ENCODE measurements at regions of chr20 and their contacts with region 1.

Region 1: DNA sequence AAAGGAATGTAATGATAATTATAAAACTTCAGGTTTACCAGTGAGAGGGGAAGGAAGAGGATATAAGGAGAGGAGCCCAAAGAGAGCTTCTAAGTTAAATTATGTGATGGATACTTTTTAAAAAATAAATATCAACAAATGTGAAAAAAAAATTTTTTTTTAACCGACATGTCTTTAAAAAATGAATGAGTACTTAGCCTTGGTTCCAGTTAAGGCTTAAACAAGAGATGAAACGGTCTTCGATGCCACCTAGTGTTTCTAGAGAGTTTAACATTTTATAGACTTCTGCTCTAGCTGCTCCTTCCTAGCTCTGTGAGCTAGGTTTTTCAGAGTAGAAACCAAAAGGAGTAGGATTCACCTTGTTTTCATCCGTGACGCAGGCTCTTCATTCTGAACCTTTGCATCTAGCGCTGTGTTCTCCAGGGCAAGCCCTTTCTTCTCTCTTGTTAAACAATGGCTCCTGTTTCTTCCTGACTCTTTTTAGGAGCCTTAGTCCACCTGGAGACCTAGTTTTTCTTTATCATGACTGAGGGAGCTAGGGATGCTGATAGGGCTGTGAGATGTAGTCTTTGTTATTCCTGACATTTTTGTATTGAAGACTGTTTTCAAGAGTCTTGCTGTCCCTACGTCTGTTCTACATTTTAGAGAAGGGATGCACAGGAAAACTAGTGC is 42.4 kb upstream of the GNRH2 start:
- DNase-seq: peak; percentile 17 to 50 (median 32)
- H3K4me3 ChIP-seq: no peak overlapping the region
- H3K4me3 Mint-ChIP-seq: no peak overlapping the region
- H3K27ac ChIP-seq: no peak overlapping the region
- H3K27ac Mint-ChIP-seq: no peak overlapping the region
- H3K4me1 ChIP-seq: no peaks in the 10 kb centered on the region
- H3K4me1 Mint-ChIP-seq: no peaks in the 10 kb centered on the region
- H3K27me3 ChIP-seq: no peaks in the 10 kb centered on the region
- H3K27me3 Mint-ChIP-seq: peaks cover 0 to 3% (median 2%) of the 10 kb centered on the region in 3 donors
- CTCF ChIP-seq: peak; percentile 69

Region 2: DNA sequence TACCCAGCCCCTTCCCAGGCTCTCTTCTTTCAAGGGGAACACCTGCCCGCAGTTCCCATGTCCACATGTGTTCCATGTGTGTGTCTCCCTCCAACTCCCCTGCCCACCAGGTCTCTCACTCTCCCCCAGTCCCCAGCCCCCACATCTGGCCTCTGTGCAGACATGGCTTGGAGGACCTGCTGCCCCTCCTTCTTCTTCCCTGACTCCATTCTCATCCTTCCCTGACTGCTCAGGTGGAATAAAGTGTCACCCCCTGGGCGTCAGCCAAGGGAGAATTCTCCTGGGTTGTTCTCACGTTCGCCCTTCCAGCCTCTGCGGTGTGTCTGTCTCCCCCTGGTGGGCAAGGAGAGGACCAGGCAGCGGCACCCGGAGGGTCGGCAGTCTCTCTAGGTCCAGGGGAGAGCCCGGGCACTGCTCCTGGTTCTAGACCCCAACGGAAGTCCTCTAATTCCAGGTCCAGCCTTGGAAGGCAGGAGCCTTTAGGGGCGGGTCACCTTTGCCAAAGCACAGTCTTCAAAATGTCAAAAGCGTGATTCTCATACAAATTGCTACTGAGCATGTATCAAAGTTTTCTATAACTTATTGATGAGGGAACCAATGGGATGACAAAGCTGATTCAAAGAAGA is 257.9 kb before region 1 on chr20:
- intact Hi-C with region 1: loop called in 1 of 2 experiments (anchors 10 kb)
- DNase-seq: peak; percentile 39 to 60 (median 51)
- H3K4me3 ChIP-seq: no peak overlapping the region
- H3K4me3 Mint-ChIP-seq: peak overlapping the region; percentile 24 to 42
- H3K27ac ChIP-seq: no peak overlapping the region
- H3K27ac Mint-ChIP-seq: no peak overlapping the region
- H3K4me1 ChIP-seq: no peaks in the 10 kb centered on the region
- H3K4me1 Mint-ChIP-seq: peaks cover 4% of the 10 kb centered on the region
- H3K27me3 ChIP-seq: peaks cover 0 to 5% of the 10 kb centered on the region in 2 donors
- H3K27me3 Mint-ChIP-seq: peaks cover 24 to 44% (median 29%) of the 10 kb centered on the region in 3 donors
- CTCF ChIP-seq: peak; percentile 89

Region 3: DNA sequence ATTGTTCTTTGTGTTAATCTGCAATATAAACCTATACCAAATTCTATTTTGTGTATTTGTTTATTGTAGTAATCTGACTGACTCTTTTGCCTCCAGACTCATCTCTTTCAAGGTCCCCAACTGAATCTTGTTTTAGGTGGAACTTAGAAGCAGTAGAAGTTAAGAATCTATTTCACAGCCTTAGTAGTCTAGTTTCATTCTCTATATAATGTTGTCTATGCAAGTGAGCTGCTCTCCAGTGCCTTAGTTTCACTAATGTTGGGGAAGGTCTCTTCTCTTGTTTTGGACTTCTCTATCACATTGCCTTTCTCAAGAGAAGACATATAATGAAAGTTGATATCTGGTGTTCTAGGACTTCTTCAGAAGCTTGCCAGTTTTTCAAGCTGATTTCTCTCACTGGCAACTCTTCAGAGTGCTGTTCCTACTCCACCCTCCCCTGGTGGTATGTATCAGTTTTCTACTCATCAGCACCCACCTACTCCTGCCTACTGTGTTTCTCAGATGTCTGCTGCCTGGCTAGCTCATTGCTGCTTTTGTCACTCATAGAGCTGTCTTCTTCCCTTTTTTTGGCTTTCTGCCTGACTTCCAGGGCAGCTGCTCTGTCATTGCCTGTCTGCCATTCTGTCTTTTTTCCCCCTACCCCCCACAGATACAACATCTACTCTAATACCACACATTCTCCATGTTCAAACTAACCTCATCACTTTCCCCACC is 45.6 kb before region 1 on chr20:
- intact Hi-C with region 1: no loop called
- DNase-seq: no peak
- H3K4me3 ChIP-seq: no peak overlapping the region
- H3K4me3 Mint-ChIP-seq: no peak overlapping the region
- H3K27ac ChIP-seq: peak overlapping the region in 1 of 2 donors; percentile 12
- H3K27ac Mint-ChIP-seq: peak overlapping the region in 3 of 7 donors; percentile 30 to 34 (median 33)
- H3K4me1 ChIP-seq: no peaks in the 10 kb centered on the region
- H3K4me1 Mint-ChIP-seq: peaks cover 10% of the 10 kb centered on the region
- H3K27me3 ChIP-seq: no peaks in the 10 kb centered on the region
- H3K27me3 Mint-ChIP-seq: no peaks in the 10 kb centered on the region
- CTCF ChIP-seq: no peak

Measured in CD14-positive monocyte (primary cell).